ENCODE measurements at regions of chr4 and their contacts with region 1.

Region 1: DNA sequence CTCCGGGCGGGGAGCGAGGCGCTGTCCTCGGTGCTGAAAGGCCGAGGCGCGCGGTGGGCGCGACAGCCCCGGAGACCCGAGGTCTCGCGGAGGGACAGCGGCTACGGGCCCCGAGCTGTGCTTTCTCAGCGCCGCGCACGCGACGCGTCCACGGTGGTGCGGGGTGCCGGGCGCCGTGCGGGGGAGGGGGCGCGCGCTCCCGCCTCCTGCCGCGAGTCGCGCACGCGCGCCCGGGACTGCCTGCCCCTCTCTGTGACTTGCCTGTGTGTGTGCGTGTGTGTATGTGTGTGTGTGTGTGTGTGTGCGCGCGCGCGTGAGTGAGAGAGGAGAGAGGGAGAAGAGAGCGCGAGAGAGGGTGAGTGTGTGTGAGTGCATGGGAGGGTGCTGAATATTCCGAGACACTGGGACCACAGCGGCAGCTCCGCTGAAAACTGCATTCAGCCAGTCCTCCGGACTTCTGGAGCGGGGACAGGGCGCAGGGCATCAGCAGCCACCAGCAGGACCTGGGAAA is at the start of gene GRIA2:
- DNase-seq: peak; percentile 84
- ATAC-seq: peak; percentile 82
- H3K4me3 Mint-ChIP-seq: peak within 1 kb of the TSS; percentile 76
- H3K27ac Mint-ChIP-seq: no peak within 1 kb of the TSS
- H3K4me1 Mint-ChIP-seq: peaks cover 22% of the 10 kb centered on the region
- H3K27me3 Mint-ChIP-seq: peaks cover 69% of the 10 kb centered on the region
- CTCF ChIP-seq: no peak
- total RNA-seq, gene GRIA2: not detected in 3 replicates

Region 2: GRCh38 chr4:157291071-157291470 is 70.6 kb after region 1 on chr4:
- CTCF ChIA-PET with region 1: interaction called, 10 read pairs
- POLR2A ChIA-PET with region 1: no interaction called
- DNase-seq: no peak
- ATAC-seq: no peak
- H3K4me3 Mint-ChIP-seq: no peak overlapping the region
- H3K27ac Mint-ChIP-seq: no peak overlapping the region
- H3K4me1 Mint-ChIP-seq: peaks cover 11% of the 10 kb centered on the region
- H3K27me3 Mint-ChIP-seq: no peaks in the 10 kb centered on the region
- CTCF ChIP-seq: no peak

Region 3: GRCh38 chr4:157994895-157995294 is 774.5 kb after region 1 on chr4:
- CTCF ChIA-PET with region 1: no interaction called
- POLR2A ChIA-PET with region 1: no interaction called
- DNase-seq: no peak
- ATAC-seq: no peak
- H3K4me3 Mint-ChIP-seq: no peak overlapping the region
- H3K27ac Mint-ChIP-seq: no peak overlapping the region
- H3K4me1 Mint-ChIP-seq: no peaks in the 10 kb centered on the region
- H3K27me3 Mint-ChIP-seq: no peaks in the 10 kb centered on the region
- CTCF ChIP-seq: no peak